ENCODE measurements at regions of chr1 and their contacts with region 1.

Region 1: GRCh38 chr1:226062558-226063223 is at the start of gene H3-3A:
- DNase-seq: peak; percentile 99
- H3K4me3 Mint-ChIP-seq: peak within 1 kb of the TSS; percentile 89
- H3K27ac Mint-ChIP-seq: peak within 1 kb of the TSS; percentile 94
- H3K4me1 Mint-ChIP-seq: peaks cover 39% of the 10 kb centered on the region
- H3K27me3 Mint-ChIP-seq: no peaks in the 10 kb centered on the region
- CTCF ChIP-seq: no peak
- total RNA-seq, gene H3-3A: 539 and 568 TPM in 2 replicates

Region 2: DNA sequence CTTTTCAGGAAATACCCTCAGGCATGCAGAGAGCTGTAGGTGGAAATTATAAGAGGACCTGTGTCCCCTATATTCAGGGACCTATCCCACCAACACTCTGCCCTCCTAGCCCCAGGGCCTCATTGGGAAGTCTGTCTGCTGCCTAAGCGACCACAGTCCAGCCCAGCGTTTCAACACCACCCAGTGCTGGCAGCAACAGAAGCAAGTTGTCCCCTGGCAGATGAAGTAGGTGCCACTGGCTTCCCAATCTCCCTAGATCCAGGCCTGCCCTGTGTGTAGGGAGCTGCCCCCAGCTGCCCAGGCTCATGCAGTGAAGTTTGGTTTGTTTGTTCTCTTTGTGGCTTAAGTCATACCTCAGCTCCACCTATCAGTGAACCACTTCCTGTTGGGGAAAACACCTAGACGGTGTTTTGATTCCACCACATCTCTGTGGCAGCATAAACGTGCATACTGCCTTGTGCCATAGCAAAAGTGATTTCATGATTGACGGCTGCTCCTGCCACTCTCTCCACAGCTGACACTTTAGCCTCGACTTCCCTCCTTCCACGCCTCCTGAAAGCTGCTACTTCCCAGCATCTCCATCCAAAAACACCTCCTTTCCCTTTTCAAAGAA is 165.6 kb before region 1 on chr1:
- CTCF ChIA-PET with region 1: no interaction called
- intact Hi-C with region 1: no loop called
- DNase-seq: peak; percentile 79
- H3K4me3 Mint-ChIP-seq: no peak overlapping the region
- H3K27ac Mint-ChIP-seq: peak overlapping the region; percentile 77
- H3K4me1 Mint-ChIP-seq: peaks cover 37% of the 10 kb centered on the region
- H3K27me3 Mint-ChIP-seq: no peaks in the 10 kb centered on the region
- CTCF ChIP-seq: no peak

Region 3: DNA sequence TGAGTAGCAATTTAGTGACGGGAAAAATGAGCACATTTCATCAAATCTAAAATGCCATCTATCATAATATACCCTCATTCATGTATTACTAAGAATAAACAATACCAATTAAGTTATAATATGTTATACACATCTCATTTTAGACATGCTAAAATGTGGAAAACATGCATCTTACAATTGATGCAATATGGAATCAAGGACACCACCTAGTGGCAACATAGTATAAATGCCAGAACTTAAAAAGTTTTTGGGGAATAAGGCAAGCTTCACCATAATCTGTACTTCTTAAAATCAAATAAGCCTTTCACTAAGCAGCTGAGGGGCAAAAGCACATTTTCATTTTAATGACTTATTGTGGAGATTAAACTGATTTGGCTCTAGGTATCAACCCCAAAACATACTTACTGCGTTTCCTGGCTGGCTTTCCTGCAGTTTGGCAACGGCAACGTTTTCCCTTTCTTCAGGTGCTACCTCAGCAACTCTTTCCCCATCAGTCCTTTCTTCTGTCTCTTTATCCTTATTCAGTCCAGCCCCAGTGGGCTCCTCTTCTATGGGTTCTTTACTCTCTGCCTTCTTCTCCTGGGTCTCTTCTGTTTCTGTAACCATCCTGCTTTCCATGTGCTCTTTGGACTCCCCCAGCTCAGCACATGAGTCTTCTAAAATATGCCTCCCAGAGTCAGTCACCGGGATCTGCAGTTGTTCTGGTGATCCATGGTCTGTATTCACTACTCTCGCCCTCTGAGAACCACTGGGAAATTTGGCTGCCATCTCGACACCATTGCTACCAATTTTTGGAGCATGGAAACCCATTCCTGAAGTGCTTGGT is 75.0 kb before region 1 on chr1:
- CTCF ChIA-PET with region 1: interaction called, 20 read pairs
- intact Hi-C with region 1: no loop called
- DNase-seq: no peak
- H3K4me3 Mint-ChIP-seq: no peak overlapping the region
- H3K27ac Mint-ChIP-seq: no peak overlapping the region
- H3K4me1 Mint-ChIP-seq: no peaks in the 10 kb centered on the region
- H3K27me3 Mint-ChIP-seq: no peaks in the 10 kb centered on the region
- CTCF ChIP-seq: peak; percentile 67

Region 4: DNA sequence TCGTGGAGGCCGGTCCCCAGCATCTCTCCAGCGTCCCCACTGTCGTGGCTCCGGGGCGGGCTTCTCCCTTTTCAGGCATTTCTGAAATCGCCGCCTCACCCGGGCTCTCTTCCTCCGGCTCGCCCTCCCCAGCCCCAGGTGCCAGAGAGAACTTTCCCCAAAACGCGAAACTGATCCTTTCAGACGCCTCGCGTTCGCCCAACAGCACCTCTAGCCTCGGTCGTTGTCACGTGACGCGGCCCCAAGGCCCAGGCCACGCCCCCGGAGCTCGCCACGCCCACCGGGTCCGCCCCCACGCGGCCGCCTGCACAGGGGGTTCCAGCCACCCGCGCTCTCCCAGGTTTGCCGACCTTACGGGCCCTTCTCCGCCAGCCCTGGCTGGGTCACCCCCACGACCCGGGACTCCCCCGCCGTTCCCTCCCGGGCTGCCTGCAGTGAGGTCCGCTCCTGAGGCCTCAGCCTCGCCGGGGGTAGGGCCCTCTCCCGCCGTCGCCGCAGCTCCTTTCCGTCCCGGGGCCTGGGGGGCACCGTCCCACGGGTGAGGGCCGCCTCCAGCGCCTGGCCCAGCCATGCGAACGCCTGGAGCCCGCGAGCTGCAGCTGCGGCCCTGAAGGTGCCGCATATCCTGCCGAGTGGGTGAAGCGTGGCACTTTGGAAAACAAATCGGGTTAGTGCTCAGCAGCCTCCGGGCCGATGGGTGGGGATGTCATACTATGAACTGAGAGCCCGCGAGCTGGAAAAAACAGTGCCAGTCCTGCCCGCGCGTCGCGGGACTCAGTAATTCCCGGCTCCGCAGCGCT is 20.8 kb after region 1 on chr1:
- CTCF ChIA-PET with region 1: interaction called, 42 read pairs
- intact Hi-C with region 1: no loop called
- DNase-seq: peak; percentile 97
- H3K4me3 Mint-ChIP-seq: peak overlapping the region; percentile 81
- H3K27ac Mint-ChIP-seq: peak overlapping the region; percentile 58
- H3K4me1 Mint-ChIP-seq: peaks cover 6% of the 10 kb centered on the region
- H3K27me3 Mint-ChIP-seq: no peaks in the 10 kb centered on the region
- CTCF ChIP-seq: no peak

Region 5: GRCh38 chr1:226109829-226110248 is 47.1 kb after region 1 on chr1:
- CTCF ChIA-PET with region 1: interaction called, 18 read pairs
- intact Hi-C with region 1: no loop called
- DNase-seq: peak; percentile 95
- H3K4me3 Mint-ChIP-seq: peak overlapping the region; percentile 86
- H3K27ac Mint-ChIP-seq: peak overlapping the region; percentile 96
- H3K4me1 Mint-ChIP-seq: peaks cover 44% of the 10 kb centered on the region
- H3K27me3 Mint-ChIP-seq: no peaks in the 10 kb centered on the region
- CTCF ChIP-seq: no peak

Region 6: DNA sequence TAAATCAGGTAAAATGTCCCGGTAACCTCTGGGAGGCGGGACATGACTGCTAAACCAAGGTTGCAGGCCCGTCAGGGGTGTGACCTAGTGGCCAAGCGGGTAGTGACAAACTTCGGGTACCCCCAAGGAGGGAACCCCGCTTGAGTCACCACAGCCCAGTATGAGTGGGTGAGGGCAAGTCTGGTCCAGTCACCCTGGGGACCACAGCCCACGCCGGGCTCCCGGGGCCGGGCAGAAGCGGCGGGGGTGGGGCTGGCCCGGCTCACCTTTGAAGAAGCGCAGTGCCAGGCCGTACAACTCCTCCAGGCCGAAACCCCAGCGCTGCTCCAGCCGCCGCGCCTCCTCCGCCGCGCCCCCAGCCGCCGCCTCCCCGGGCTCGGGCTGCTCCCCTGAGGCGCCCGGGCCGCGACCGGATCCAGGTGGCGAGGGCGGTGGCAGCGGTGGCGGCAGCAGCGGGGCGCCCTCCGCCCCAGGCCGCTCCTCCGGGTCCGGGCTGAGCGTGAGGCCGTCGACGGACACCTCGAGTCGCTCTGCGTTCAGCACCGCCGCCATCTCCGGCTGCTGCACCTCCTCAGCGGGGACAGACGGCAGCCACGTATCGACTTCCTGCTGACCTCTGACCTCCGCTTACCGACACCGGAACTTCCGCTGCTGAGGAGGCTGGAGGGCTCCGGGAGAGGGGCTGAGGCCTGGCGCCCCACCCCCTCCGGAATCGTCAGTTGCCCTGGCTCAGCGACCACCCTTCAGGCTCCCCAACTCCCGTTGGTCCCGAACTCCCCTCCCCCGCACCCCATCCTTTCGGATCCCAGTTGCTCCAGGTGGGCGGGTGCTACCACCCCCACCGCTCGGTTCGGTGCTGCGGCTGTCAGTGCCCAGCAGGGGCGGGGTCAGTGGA is 123.7 kb after region 1 on chr1 and contains the start of gene ACBD3:
- CTCF ChIA-PET with region 1: interaction called, 7 read pairs
- intact Hi-C with region 1: loop called (anchors 10 kb)
- DNase-seq: peak; percentile 91
- H3K4me3 Mint-ChIP-seq: peak within 1 kb of the TSS; percentile 84
- H3K27ac Mint-ChIP-seq: peak within 1 kb of the TSS; percentile 70
- H3K4me1 Mint-ChIP-seq: peaks cover 31% of the 10 kb centered on the region
- H3K27me3 Mint-ChIP-seq: no peaks in the 10 kb centered on the region
- CTCF ChIP-seq: peak; percentile 24
- total RNA-seq, gene ACBD3: 50.3 and 51.6 TPM in 2 replicates